Activated naive CD8-positive, alpha-beta T cell treated with anti-CD3 and anti-CD28 coated beads, Interleukin-2, amount 10 ng/mL, durations not matched to agents 7 days and 5 days (primary cell): ENCODE measurements at regions of chr12 and their contacts with region 1.

Region 1: DNA sequence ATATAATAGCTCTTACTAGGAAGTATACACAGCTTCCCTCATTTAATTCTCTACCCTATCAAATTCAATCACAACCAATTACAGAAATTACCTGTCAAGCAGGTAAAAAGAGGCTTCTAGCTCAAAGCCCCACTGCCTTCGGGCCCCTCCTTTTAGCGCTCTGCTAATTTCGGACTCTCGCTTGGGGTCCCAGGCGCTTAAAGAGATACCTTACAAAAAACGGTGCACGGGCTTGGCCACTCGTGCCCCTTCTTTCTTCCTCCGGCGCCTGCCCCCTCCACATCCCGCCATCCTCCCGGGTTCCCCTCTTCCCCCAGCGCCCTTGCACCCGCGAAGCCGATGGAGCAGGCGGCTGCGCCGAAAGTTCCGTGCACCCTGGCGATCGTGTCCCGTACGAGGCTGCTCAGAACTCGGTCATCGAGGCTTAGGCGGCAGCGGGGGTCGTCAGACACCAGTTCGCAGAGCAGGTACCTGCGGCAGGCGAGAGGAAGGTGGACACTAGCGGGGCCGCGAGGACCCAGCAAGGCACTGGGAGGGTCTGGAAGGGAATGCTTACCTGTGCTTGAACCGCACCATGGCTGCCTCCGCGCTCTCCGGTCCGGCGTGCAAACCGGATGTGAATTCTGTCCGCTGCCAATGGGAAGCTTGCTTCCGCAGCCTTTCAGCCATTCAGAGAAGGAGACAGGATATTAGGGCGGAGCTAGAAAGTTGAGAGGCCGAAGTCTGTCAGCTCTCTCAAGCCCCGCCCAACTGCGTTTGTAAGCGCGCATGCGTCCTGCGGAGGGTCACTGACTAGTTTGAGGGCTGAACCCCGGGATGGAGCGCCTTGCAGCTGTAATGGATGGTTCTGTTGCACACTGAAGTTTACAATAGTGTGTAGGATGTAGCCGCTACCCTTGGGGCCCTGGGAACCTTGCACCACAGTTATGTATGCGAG is at the start of gene POP5:
- DNase-seq: peak; percentile 89
- ATAC-seq: peak; percentile 95
- H3K4me3 Mint-ChIP-seq: peak within 1 kb of the TSS; percentile 94
- H3K27ac Mint-ChIP-seq: peak within 1 kb of the TSS; percentile 91
- H3K4me1 Mint-ChIP-seq: peaks cover 29% of the 10 kb centered on the region
- H3K27me3 Mint-ChIP-seq: peaks cover 12% of the 10 kb centered on the region
- total RNA-seq, gene POP5: 59.4 to 62.3 TPM

Region 2: DNA sequence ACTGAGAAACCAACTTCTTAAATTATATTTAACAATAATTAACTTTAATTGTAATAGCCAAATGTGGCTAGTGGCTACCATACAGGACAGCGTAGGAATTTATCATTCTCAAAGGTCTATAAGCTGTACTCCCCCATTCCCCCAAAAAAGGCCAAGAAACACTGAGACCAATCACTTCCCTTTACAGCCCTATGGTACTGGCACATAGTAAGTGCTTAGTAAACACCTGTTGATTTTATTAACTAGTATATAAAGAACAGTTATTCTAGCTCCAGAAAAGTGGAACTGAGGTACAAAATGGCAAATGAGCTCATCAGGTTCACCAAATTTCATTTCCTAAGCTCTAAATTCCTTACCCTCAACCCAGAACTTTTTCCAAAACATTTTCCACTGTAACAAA is 105.4 kb before region 1 on chr12:
- POLR2A ChIA-PET with region 1: no interaction called
- DNase-seq: no peak
- ATAC-seq: no peak
- H3K4me3 Mint-ChIP-seq: no peak overlapping the region
- H3K27ac Mint-ChIP-seq: no peak overlapping the region
- H3K4me1 Mint-ChIP-seq: peaks cover 8% of the 10 kb centered on the region
- H3K27me3 Mint-ChIP-seq: no peaks in the 10 kb centered on the region

Region 3: GRCh38 chr12:120522568-120522967 is 58.5 kb before region 1 on chr12:
- POLR2A ChIA-PET with region 1: no interaction called
- DNase-seq: no peak
- ATAC-seq: no peak
- H3K4me3 Mint-ChIP-seq: no peak overlapping the region
- H3K27ac Mint-ChIP-seq: no peak overlapping the region
- H3K4me1 Mint-ChIP-seq: peaks cover 3% of the 10 kb centered on the region
- H3K27me3 Mint-ChIP-seq: no peaks in the 10 kb centered on the region

Region 4: DNA sequence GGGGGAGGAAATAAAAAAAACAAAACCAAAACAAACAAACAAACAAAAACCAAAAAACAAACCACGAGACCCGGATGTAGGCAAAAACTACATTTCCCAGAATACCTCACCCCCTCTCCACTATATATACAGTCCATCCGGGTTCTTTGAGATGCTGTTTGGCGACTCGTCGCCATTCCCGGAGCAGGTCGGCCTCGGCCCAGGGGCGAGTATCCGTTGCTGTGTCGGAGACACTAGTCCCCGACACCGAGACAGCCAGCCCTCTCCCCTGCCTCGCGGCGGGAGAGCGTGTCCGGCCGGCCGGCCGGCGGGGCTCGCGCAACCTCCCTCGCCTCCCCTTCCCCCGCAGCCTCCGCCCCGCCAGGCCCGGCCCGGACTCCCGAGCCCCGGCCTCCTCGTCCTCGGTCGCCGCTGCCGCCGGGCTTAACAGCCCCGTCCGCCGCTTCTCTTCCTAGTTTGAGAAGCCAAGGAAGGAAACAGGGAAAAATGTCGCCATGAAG is 46.8 kb before region 1 on chr12 and contains the start of gene RNF10:
- POLR2A ChIA-PET with region 1: interaction called, 11 read pairs
- DNase-seq: peak; percentile 75
- ATAC-seq: peak; percentile 66
- H3K4me3 Mint-ChIP-seq: peak within 1 kb of the TSS; percentile 92
- H3K27ac Mint-ChIP-seq: peak within 1 kb of the TSS; percentile 88
- H3K4me1 Mint-ChIP-seq: peaks cover 47% of the 10 kb centered on the region
- H3K27me3 Mint-ChIP-seq: no peaks in the 10 kb centered on the region
- total RNA-seq, gene RNF10: 205 to 216 TPM

Region 5: DNA sequence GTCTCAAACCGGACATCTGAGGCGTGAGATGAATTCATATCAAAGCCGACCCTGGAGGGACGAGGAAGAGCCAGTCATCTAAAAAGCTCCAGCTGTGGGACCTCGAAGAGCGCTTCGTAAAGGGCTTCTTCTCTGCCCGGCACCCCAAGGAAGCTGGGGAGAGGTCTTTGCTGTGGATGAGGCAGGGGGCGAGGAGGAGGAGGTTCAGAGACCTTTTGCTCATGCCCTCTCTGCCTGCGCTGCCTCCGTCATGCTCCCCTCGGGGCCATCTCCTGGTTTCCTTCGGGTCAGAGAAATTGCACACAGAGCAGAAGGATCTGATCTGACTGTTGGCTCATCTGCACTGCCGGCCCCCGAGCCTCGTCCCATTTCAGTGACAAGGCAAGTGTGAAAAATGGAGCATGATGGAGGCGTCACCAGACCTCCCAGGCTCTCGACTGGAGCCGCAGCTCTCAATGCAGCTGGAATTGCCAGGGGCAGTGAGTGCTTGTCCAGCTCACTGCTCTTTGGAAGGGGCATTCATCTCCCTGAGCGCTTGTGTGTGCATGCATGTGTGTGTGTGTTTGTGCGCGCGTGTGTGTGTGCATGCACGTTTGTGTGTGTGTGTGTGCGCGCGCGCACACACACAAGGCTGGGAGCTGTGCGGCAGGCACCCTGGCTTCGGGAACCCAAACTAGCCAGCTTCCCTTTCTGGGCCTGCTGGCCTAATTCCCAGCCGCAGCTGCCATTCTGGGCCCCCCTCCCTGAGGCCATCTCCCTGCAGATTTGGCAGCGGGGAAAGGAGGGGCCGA is 68.6 kb after region 1 on chr12:
- POLR2A ChIA-PET with region 1: interaction called, 10 read pairs
- DNase-seq: no peak
- ATAC-seq: peak; percentile 9
- H3K4me3 Mint-ChIP-seq: peak overlapping the region; percentile 79
- H3K27ac Mint-ChIP-seq: peak overlapping the region; percentile 64
- H3K4me1 Mint-ChIP-seq: peaks cover 15% of the 10 kb centered on the region
- H3K27me3 Mint-ChIP-seq: peaks cover 69% of the 10 kb centered on the region